Left colon (tissue), 2 donors: ENCODE measurements at regions of chr15 and their contacts with region 1.

Region 1: DNA sequence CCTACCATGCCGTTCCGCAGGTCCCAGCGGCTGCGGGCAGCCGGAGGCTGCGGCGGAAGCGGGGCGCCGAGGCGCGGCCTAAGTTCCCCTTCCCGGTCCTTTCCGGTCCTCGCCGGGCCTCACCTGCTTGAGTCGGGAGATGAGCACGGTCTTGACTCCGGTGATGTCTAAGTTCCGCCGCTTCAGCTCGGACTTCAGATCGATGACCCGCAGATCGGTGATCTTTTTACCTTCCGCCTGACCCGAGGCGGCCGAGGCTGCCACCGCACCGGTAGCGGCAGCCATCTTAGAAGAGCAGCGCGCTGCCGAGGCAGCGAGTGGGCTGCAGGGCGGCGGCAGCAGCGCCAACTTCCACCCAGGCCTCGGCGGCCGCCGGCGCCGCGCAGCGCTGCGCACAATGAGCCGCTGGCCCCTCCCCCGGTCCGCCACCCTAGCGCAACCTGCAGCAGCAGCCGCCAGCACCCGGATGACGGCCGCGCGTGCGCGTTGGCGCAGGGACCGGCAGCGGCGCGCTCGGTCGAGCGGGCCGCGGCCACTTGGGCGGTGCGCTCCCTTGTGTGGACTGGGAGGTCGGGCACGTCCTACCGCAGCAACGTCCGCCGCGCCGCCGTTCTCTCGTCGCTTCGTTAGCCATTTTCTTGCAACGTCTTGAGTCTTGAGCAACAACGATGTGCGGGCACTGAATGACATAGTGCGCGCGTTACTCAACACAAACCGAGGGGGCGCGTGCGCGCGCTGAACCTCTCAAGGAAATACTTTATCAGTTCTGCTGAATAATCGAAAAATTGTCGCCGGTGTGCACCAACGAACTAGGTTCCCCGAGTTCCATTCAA is at the start of gene SLTM:
- DNase-seq: peak; percentile 92 to 96
- ATAC-seq: peak; percentile 89
- total RNA-seq, gene SLTM: 68.3 to 87.5 TPM

Region 2: GRCh38 chr15:58770857-58771620 is 162.5 kb before region 1 on chr15 and contains the start of gene MINDY2:
- intact Hi-C with region 1: loop called in 1 of 2 experiments (anchors 5 kb)
- DNase-seq: peak; percentile 98
- ATAC-seq: peak; percentile 93
- total RNA-seq, gene MINDY2: 9.0 to 14.1 TPM

Region 3: DNA sequence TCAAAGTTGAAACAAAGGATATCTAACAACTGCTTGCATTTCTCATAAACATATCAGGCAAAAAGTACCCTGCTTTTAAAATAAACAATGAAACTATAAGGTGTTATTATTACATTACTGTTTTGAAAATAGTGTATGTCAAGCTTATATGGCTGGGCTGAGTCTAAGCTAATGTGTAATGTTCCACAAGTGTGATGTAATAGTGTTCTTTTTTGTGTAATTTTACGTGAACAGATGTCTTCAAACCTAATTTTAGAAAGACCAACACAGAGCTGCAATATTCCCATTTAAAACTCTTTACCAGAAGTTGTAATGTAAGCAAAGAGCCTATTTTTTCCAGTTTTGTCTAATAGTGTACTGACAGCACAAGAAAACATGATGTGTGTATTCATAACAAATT is 128.4 kb before region 1 on chr15:
- intact Hi-C with region 1: no loop called
- DNase-seq: no peak
- ATAC-seq: no peak

Region 4: GRCh38 chr15:58864602-58865424 is 68.7 kb before region 1 on chr15:
- intact Hi-C with region 1: no loop called
- DNase-seq: no peak
- ATAC-seq: no peak

Region 5: DNA sequence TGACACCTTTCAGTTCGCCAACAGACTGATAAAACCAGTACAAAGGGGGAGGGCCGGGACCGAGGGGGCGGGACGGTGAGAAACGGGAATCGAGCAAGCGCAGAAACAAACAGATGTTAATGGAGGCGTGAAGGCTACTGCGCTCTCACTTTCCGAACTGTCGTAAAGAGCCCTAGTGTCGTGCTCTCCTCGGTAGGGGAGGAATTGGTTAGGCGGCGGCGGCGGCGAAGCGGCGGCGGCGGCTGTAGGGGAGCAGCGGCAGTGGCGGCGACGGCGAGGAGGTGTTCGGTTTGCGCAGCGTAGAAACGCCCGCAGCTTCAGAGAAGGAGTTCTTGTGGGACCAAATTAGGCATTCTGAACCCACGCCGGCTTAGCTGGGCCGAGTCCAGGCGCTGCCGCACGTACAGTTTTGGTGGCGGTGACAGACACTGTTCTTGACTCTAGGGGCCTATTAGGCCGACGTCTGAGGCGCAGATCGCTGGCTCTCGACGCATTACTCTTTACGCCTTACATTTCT is 54.0 kb after region 1 on chr15 and contains the start of gene RNF111:
- intact Hi-C with region 1: no loop called
- DNase-seq: peak; percentile 91 to 96
- ATAC-seq: peak; percentile 96
- total RNA-seq, gene RNF111: 27.0 to 31.1 TPM